ENCODE measurements at regions of chr5 and their contacts with region 1.

Region 1: DNA sequence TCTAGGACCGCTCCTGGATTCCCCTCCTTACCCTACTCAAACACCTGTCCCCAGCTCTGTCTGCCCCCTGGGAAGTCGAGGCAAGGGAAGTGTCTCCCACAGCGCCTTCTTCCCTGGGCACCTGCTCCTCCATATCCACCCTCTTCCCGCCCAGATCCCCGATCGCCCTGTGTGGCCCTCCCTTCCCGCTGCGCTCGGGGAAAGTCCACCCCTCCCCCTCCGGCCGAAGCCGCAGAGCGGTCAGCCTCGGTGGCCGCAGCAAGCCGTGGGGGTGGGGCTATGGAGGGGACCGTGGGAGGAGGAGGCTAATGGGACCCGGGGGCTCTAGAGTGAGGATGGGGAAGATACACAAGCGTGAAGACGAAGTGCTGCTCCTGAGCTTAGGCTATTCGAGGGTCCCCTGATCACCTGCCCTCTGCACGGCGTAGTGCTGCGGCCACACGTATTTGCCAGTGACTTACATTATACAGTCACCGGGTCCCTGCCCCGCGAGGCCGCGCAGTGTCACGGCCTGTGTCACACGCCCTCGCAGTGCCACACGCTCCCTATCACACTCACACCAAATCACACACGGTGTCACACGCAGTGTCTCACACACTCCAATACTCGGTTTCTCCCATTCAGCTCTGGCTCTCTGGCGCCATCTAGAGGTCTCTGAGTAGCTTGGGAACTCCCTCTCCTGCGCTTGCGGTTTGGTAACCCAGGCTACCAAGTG is 658 bp upstream of the PCDH1 start:
- DNase-seq: peak; percentile 96
- H3K4me3 ChIP-seq: peak overlapping the region; percentile 78 to 88
- H3K27ac ChIP-seq: peak overlapping the region; percentile 86 to 95
- H3K4me1 ChIP-seq: peaks cover 3% of the 10 kb centered on the region
- H3K27me3 ChIP-seq: peaks cover 8% of the 10 kb centered on the region
- CTCF ChIP-seq: peak; percentile 93 to 99 (median 98)
- POLR2A ChIP-seq: peak; percentile 22

Region 2: GRCh38 chr5:141420855-141421496 is 457.9 kb before region 1 on chr5 and contains the start of gene PCDHGA11:
- intact Hi-C with region 1: no loop called
- DNase-seq: no peak
- H3K4me3 ChIP-seq: no peak within 1 kb of the TSS
- H3K27ac ChIP-seq: no peak within 1 kb of the TSS
- H3K4me1 ChIP-seq: no peaks in the 10 kb centered on the region
- H3K27me3 ChIP-seq: no peaks in the 10 kb centered on the region
- CTCF ChIP-seq: peak in 3 of 4 experiments; percentile 25 to 49 (median 43)
- POLR2A ChIP-seq: no peak
- total RNA-seq, gene PCDHGA11: 2.9 to 3.4 TPM

Region 3: DNA sequence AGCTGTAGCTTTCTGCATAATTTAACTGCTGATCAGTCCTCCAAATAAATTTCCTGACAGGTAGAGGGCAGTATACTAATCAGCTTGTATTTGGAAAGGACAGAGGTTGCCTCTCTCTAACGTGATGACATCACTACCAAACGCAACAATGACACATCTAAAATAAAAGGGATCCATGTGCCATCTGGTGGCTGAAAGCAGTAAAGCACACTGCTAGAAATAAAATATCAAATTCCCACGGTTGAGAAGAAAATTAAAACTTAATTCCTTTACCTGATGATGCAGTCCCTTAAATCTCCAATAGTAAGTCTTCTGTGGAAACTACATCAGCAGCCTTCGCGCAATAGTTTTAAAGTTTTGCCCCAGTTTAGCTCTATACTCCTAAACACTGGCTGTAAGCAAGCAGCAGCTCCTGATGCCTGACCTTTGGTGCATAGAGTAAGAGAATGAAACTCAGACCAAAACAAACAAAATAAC is 314.6 kb before region 1 on chr5:
- intact Hi-C with region 1: no loop called
- DNase-seq: peak; percentile 76
- H3K4me3 ChIP-seq: no peak overlapping the region
- H3K27ac ChIP-seq: peak overlapping the region; percentile 18 to 57
- H3K4me1 ChIP-seq: peaks cover 4% of the 10 kb centered on the region
- H3K27me3 ChIP-seq: no peaks in the 10 kb centered on the region
- CTCF ChIP-seq: peak; percentile 87 to 99 (median 98)
- POLR2A ChIP-seq: no peak

Region 4: DNA sequence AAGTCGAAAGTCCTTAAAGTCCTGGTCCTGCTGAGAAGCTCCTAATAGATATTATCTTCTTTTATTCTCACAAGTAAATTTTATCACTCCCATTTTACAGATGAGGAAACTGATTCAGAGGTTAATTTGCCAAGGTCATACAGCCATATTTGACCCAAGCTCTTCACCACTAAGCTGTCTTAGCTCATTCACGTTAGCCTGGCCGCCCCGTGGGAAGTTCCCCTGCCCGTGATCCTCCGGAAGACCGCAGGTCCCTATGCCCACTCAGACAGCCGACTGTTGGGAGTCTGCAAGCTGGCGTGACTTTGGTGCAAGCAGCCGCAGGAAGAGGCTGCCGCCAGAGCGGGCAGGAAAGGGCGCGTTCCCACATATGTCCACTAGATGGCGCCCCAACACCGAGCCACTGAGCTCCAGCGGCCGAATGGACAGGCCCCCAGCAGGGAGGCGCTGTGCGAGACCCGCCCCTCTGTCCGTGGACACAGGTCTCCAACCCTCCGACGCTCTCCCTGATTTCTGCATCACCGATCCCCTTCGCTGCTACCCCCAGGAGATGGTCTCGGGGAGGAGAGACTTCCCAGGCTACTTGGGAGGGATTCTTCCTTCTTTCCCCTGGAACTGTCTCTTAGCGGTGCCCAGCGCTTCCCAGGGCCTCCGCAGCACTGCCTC is 186.9 kb before region 1 on chr5:
- intact Hi-C with region 1: loop called (anchors 2 kb)
- DNase-seq: peak; percentile 83
- H3K4me3 ChIP-seq: peak overlapping the region; percentile 9 to 22
- H3K27ac ChIP-seq: no peak overlapping the region
- H3K4me1 ChIP-seq: no peaks in the 10 kb centered on the region
- H3K27me3 ChIP-seq: no peaks in the 10 kb centered on the region
- CTCF ChIP-seq: peak; percentile 96 to 99 (median 98)
- POLR2A ChIP-seq: no peak

Region 5: GRCh38 chr5:141701360-141702119 is 177.3 kb before region 1 on chr5:
- intact Hi-C with region 1: loop called (anchors 2 kb)
- DNase-seq: no peak
- H3K4me3 ChIP-seq: peak overlapping the region in 1 of 2 donors; percentile 40
- H3K27ac ChIP-seq: no peak overlapping the region
- H3K4me1 ChIP-seq: no peaks in the 10 kb centered on the region
- H3K27me3 ChIP-seq: peaks cover 9% of the 10 kb centered on the region
- CTCF ChIP-seq: no peak
- POLR2A ChIP-seq: no peak

Region 6: DNA sequence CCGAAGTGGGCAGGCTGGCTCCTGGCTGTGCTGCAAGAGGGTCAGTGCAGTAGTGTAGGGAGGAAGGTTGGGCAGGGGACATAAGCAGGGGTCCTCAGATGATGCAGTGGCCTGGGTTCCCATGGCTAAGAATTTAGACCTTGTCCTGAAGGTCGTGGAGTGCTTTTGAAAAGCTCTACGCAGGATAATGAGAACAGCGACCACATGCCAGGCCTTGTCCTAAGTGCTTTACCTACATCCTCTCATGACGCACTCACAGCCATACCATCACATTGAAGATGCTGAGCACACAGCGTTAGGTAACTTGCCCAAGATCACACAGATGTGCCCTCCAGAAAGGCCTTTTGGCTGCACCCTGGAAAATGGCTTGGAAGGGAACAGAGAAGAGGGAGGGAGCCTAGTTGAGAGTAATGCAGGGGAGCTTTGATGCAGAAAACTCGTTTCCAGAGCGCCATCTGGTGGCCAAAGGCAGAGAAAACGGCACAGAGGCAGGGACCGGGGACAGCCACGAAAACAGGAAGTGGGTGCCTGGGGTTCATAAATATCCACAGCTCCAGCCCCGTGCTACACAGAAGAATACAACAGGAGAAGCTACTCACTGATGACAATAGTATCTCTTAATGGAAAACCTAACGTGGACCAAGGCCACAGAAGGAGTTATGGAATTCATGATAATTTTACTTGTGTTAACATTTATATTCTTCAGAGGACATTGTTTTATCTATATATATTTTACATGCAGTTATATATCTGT is 81.8 kb after region 1 on chr5:
- intact Hi-C with region 1: loop called (anchors 5 kb)
- DNase-seq: peak; percentile 84
- H3K4me3 ChIP-seq: no peak overlapping the region
- H3K27ac ChIP-seq: peak overlapping the region; percentile 41 to 44
- H3K4me1 ChIP-seq: no peaks in the 10 kb centered on the region
- H3K27me3 ChIP-seq: no peaks in the 10 kb centered on the region
- CTCF ChIP-seq: peak; percentile 76 to 94 (median 88)
- POLR2A ChIP-seq: no peak

Measured in prostate gland (tissue), 2 donors.